ENCODE measurements at regions of chr4 and their contacts with region 1.

Region 1: DNA sequence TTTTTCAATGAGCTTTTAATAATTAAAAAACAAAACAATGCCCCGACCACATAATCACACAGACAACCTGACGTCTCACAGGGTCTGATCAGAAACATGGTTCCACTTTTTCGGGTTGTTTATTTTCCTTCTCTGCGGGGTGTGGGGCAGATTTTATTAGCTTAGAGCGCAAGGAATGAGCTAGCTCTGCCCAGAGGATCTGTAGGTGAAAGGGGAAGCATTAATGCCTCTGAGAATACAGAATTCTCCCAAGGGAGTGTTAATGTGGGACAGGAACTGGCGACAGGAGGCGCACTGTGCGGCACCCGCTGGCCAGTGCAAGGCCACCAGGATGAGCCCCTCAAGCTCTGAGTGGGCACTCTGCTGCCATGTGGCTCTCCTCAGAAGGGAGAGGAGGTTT is 181.5 kb downstream of the TSPAN5 start:
- DNase-seq: no peak
- H3K4me3 ChIP-seq: no peak overlapping the region
- H3K27ac ChIP-seq: peak overlapping the region in 1 of 2 donors; percentile 4
- H3K4me1 ChIP-seq: no peaks in the 10 kb centered on the region
- H3K27me3 ChIP-seq: no peaks in the 10 kb centered on the region
- CTCF ChIP-seq: no peak
- POLR2A ChIP-seq: no peak

Region 2: DNA sequence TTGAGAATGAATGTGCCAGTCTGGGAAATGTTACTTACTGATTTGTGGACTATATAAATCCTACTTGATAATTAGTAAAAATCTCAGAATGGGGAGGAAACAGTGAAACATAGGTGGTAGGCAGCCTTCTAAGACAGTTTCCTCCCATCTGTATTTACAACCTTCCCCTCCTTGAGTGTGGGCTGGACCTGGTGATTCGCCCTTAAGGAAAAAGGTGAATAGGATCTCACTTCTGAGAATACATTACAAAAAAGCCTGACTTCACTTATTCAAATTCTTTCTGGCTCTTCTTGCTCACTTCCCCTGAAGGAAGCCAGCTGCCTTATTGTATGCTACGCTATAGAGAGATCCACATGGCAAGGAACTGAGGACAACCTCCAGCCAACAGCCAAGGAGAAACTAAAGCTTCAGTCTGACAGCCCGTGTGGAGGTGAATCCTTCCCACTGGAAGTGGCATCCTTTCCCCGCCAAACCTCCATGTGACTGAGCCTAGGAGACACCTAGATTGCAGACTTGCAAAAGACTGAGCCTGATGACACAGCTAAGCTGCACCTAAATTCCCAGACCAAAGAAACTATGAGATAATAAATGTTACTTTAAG is 918.6 kb before region 1 on chr4:
- intact Hi-C with region 1: no loop called
- DNase-seq: no peak
- H3K4me3 ChIP-seq: no peak overlapping the region
- H3K27ac ChIP-seq: no peak overlapping the region
- H3K4me1 ChIP-seq: no peaks in the 10 kb centered on the region
- H3K27me3 ChIP-seq: no peaks in the 10 kb centered on the region
- CTCF ChIP-seq: no peak
- POLR2A ChIP-seq: no peak

Region 3: DNA sequence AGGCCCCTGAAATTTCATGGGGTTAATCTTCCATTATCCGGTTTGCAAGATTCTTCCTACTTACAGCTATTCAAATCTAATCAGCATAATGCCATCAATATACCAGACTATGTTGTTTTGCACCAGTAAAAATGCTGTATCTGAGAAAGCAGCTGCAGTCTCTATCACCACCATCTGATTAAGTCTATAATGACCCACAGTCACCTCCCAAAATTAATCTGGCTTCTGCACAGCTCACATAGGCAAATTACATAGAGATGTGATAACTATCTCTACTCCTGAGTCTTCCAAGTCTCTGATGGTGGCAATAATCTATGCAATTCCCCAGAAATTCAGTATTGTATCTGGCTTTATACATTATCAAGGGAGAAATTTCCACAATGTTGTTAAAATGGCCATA is 446.8 kb before region 1 on chr4:
- intact Hi-C with region 1: loop called (anchors 5 kb)
- DNase-seq: no peak
- H3K4me3 ChIP-seq: no peak overlapping the region
- H3K27ac ChIP-seq: no peak overlapping the region
- H3K4me1 ChIP-seq: no peaks in the 10 kb centered on the region
- H3K27me3 ChIP-seq: no peaks in the 10 kb centered on the region
- CTCF ChIP-seq: no peak
- POLR2A ChIP-seq: no peak

Measured in breast epithelium (tissue), 4 donors.